Transverse colon (tissue), 4 donors: ENCODE measurements at regions of chr11 and their contacts with region 1.

Region 1: DNA sequence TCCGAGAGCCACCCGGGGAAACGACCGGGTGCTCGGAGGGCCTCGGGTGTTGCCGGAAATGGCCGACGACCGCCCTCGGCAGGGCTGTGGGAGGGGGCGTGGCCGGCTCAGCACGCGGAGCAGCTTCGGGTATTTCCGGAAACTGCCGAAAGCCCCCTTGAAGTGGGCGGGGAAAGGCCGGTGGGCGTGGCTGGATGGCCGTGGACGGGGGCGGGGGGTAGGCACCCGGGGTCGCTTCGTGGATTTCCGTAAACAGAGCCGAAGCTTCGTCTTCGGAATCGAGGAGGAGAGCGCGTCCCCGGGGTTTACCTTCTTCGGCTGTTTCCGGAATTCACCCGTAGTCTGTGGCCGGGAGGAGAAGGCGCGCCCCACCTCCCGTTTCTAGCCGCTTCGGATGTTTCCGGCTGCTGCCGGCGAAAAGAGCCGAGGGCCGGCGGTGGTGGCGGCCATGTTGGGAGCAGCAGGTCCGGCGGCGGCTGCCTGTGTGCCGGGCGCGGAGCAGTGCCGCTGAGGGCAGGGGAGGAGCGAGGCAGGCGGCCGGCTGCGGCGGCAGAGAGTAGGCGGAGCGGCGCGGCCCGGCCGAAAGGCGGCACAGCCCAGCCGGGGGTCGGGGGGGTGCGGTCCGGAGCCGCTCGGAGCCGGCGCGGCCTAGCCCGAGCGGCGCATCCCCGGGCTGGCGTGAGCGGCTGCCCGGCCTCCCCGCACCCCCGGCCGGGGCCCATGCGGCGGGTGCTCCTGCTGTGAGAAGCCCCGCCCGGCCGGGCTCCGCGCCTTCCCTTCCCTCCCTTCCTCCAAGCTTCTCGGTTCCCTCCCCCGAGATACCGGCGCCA is at the start of gene MARK2:
- DNase-seq: peak; percentile 99
- H3K4me3 ChIP-seq: peak within 1 kb of the TSS; percentile 78 to 97 (median 92)
- H3K27ac ChIP-seq: peak within 1 kb of the TSS; percentile 90 to 95 (median 94)
- H3K4me1 ChIP-seq: peaks cover 35 to 56% (median 44%) of the 10 kb centered on the region in 4 donors
- H3K27me3 ChIP-seq: no peaks in the 10 kb centered on the region
- CTCF ChIP-seq: no peak
- EP300 ChIP-seq: no peak
- POLR2A ChIP-seq: no peak
- total RNA-seq, gene MARK2: 33.0 to 106 (median 77.8) TPM

Region 2: DNA sequence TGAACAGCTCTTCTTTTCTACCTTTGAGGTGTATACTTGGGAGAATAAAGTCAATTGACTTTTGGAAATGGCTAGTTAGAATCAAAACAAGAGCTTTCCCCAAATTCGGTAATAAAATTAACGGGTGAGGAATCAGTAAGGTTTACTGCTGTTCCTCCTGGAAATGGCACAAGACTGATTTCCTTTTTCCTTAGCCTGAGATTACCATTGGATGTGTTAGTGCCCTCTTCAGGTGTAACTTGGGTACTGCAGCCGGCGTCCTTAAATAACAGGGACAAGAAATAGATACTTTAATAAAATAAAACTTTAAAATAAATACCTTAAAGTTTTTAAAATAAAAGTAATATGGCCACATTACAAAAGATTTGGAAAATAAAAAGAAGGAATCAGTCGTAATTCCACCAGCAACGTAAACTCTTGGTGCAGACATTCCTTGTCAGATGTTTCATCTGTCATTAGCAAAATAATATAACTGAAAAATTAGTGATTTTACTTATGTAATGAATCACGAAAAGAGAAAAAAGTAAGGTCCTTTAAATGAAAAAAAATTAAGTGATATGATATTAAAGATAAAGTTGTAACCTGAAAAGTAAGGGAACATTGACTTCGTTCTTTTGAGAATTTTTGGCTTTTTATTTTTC is 100.1 kb before region 1 on chr11:
- in situ Hi-C with region 1: no loop called
- intact Hi-C with region 1: no loop called
- DNase-seq: peak; percentile 77
- H3K4me3 ChIP-seq: no peak overlapping the region
- H3K27ac ChIP-seq: no peak overlapping the region
- H3K4me1 ChIP-seq: peaks cover 0 to 8% (median 0%) of the 10 kb centered on the region in 4 donors
- H3K27me3 ChIP-seq: no peaks in the 10 kb centered on the region
- CTCF ChIP-seq: peak; percentile 88 to 99 (median 97)
- EP300 ChIP-seq: no peak
- POLR2A ChIP-seq: no peak

Region 3: GRCh38 chr11:63906585-63906984 is 67.7 kb after region 1 on chr11:
- in situ Hi-C with region 1: loop called in 1 of 4 experiments (anchors 10 kb)
- intact Hi-C with region 1: no loop called
- DNase-seq: peak; percentile 34
- H3K4me3 ChIP-seq: no peak overlapping the region
- H3K27ac ChIP-seq: no peak overlapping the region
- H3K4me1 ChIP-seq: peaks cover 0 to 9% (median 4%) of the 10 kb centered on the region in 4 donors
- H3K27me3 ChIP-seq: no peaks in the 10 kb centered on the region
- CTCF ChIP-seq: peak in 3 of 5 experiments; percentile 31 to 48 (median 33)
- EP300 ChIP-seq: no peak
- POLR2A ChIP-seq: no peak

Region 4: GRCh38 chr11:63945477-63946163 is 106.7 kb after region 1 on chr11:
- in situ Hi-C with region 1: loop called (anchors 5 to 10 kb)
- intact Hi-C with region 1: loop called (anchors 2 kb)
- DNase-seq: peak; percentile 75
- H3K4me3 ChIP-seq: no peak overlapping the region
- H3K27ac ChIP-seq: peak overlapping the region; percentile 21 to 73 (median 60)
- H3K4me1 ChIP-seq: peaks cover 12 to 45% (median 13%) of the 10 kb centered on the region in 4 donors
- H3K27me3 ChIP-seq: no peaks in the 10 kb centered on the region
- CTCF ChIP-seq: peak; percentile 72 to 93 (median 73)
- EP300 ChIP-seq: no peak
- POLR2A ChIP-seq: no peak

Region 5: GRCh38 chr11:64152841-64153691 is 314.2 kb after region 1 on chr11:
- in situ Hi-C with region 1: loop called in 2 of 4 experiments (anchors 10 to 25 kb)
- intact Hi-C with region 1: loop called (anchors 5 kb)
- DNase-seq: peak; percentile 71
- H3K4me3 ChIP-seq: no peak overlapping the region
- H3K27ac ChIP-seq: no peak overlapping the region
- H3K4me1 ChIP-seq: peaks cover 4 to 15% (median 6%) of the 10 kb centered on the region in 4 donors
- H3K27me3 ChIP-seq: no peaks in the 10 kb centered on the region
- CTCF ChIP-seq: peak; percentile 94 to 100 (median 100)
- EP300 ChIP-seq: no peak
- POLR2A ChIP-seq: no peak

Region 6: DNA sequence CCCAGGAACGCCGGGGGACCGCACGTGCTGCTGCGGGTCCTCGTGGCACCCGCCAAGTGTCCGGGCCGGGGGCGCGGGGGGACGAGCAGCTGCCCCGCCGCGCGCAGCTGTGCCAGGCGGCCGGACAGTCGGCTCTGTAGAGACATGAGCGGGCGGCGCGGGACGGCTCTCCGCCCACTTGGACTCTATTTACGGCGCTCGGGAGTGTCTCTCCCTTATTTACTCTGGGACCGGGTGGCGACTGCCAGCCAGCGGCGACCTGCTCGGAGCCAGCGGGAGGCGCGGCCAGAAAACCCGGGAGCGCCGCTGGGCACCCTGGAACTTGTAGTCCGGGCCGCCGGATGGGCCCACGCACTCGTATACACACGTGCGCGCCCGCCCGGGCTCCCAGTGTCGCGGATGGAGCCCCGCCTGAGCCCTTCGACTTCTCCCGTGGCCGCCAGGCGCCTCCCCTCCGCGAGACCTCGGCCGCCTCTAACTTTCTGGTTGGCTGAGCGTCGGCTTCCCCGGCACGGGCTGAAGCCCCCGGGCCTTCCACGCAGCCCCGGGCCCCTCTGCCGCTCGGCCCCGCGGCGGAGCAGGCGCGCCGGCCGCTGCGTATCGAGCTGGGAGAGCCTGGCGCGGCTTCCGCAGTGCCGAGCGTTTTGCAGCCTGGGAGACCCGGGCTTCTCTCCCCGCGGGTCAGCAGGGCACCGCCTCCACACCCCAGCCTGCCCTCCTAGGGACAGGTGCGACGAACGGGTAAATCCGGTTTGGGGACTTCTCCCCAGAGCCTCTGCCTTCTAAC is 327.1 kb after region 1 on chr11 and contains the start of gene MACROD1:
- in situ Hi-C with region 1: loop called in 1 of 4 experiments (anchors 25 kb)
- intact Hi-C with region 1: no loop called
- DNase-seq: peak; percentile 94
- H3K4me3 ChIP-seq: peak within 1 kb of the TSS; percentile 53 to 88 (median 67)
- H3K27ac ChIP-seq: peak within 1 kb of the TSS; percentile 84 to 94 (median 86)
- H3K4me1 ChIP-seq: peaks cover 7 to 21% (median 19%) of the 10 kb centered on the region in 4 donors
- H3K27me3 ChIP-seq: no peaks in the 10 kb centered on the region
- CTCF ChIP-seq: no peak
- EP300 ChIP-seq: no peak
- POLR2A ChIP-seq: peak; percentile 64
- total RNA-seq, gene MACROD1: 42.9 to 50.7 (median 50.1) TPM